ENCODE measurements at regions of chr17 and their contacts with region 1.

Region 1: GRCh38 chr17:67717624-67718329 is at the start of gene NOL11:
- DNase-seq: peak; percentile 98 to 99
- H3K4me3 ChIP-seq: peak within 1 kb of the TSS; percentile 67 to 82
- H3K27ac ChIP-seq: peak within 1 kb of the TSS; percentile 81 to 88
- H3K4me1 ChIP-seq: peaks cover 8 to 10% of the 10 kb centered on the region in 2 donors
- H3K27me3 ChIP-seq: no peaks in the 10 kb centered on the region
- CTCF ChIP-seq: peak; percentile 91 to 98 (median 96)
- POLR2A ChIP-seq: peak; percentile 77
- total RNA-seq, gene NOL11: 31.8 to 68.7 (median 43.4) TPM

Region 2: DNA sequence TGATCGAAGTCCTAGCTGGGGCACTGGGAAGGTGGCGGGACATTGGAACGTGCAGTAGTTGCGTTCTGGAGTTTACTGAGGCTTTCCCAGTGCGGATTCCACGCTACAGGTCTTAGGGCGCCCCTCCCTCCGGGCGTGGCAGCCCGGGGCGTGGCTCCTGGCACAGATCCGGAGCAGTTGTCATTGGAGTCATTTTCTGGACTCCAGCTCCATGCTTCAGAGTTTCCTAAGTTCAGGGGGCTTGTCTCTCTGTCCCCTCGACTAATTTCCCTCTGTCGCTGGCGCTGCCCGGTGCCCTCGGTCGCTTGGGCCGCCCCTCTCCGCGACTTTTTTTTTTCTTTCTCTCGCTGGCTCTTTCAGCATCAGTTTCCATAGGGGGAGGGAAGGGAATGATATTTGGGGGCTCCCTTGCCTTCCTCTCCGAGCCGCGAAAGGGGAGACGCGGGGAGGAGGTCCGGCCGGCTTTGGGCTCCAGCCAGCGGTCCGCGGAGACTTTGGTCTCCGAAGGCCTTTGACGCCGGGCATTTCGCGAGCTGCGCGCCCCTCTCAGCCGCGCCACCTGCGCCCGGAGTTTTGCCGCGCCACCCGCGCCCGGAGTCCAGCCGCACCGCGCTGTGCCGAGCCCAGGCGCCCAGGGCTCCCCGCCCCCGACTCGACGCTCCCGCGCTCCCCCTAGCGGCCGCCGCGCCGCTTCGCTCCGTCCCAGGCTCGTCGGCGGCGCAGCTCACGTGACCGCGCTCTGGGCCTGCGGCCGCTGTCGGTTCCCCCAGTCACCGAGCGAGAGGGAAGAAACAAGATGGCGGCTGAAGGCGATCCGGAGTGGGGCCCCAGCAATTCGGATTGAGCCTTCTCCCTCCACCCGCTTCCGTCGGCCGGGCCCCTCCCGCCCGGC is 107.2 kb after region 1 on chr17 and contains the start of gene BPTF:
- intact Hi-C with region 1: loop called (anchors 10 kb)
- DNase-seq: peak; percentile 88 to 93
- H3K4me3 ChIP-seq: peak within 1 kb of the TSS; percentile 90 to 96
- H3K27ac ChIP-seq: peak within 1 kb of the TSS; percentile 98
- H3K4me1 ChIP-seq: peaks cover 6 to 9% of the 10 kb centered on the region in 2 donors
- H3K27me3 ChIP-seq: no peaks in the 10 kb centered on the region
- CTCF ChIP-seq: peak; percentile 65 to 99 (median 97)
- POLR2A ChIP-seq: peak; percentile 56 to 61
- total RNA-seq, gene BPTF: 67.6 to 183 (median 117) TPM